Breast epithelium (tissue), 4 donors: ENCODE measurements at regions of chr17 and their contacts with region 1.

Region 1: DNA sequence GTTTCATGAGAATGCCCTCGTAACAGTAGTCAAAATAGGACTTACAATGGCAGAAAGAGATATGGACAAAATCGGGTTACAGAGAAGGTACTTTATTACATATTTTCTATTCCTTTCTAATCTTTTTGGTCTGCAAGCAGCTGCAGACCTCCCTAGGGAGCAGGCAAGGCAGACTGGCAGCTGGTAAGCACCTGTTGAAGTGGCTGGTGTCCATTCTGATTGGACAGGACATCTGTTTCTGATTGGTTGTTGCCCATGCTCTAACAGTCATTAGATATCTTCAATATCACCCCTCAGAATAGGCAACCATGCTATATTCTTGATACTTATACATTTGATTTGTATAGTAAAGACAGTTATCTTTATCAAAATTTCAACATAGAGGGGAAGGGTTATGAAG is 606.3 kb downstream of the KCNJ2 start:
- DNase-seq: no peak
- H3K4me3 ChIP-seq: no peak overlapping the region
- H3K27ac ChIP-seq: no peak overlapping the region
- H3K4me1 ChIP-seq: no peaks in the 10 kb centered on the region
- H3K27me3 ChIP-seq: no peaks in the 10 kb centered on the region
- CTCF ChIP-seq: no peak
- POLR2A ChIP-seq: no peak

Region 2: DNA sequence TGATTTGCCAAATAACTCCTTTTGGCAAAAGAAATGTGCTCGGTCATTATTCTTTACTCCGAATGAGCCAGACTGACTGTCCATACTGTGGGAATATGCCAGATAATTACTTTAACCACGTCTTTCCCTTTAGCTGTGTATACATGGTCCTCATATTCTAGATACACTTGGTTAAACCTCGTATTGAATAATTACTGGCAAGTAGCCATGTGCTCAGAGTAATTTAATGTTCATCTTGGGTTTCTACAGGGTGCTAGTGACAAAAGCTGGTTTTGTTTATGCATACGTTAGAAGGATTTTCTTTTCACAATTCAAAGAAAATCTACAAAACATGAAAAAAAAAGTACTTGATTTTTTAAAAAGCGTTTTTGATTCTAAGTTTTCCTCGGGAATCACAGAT is 66.1 kb before region 1 on chr17:
- intact Hi-C with region 1: loop called (anchors 2 kb)
- DNase-seq: no peak
- H3K4me3 ChIP-seq: no peak overlapping the region
- H3K27ac ChIP-seq: no peak overlapping the region
- H3K4me1 ChIP-seq: no peaks in the 10 kb centered on the region
- H3K27me3 ChIP-seq: peaks cover 0 to 7% of the 10 kb centered on the region in 2 donors
- CTCF ChIP-seq: no peak
- POLR2A ChIP-seq: no peak

Region 3: GRCh38 chr17:70739065-70739464 is 36.6 kb before region 1 on chr17:
- intact Hi-C with region 1: no loop called
- DNase-seq: no peak
- H3K4me3 ChIP-seq: no peak overlapping the region
- H3K27ac ChIP-seq: no peak overlapping the region
- H3K4me1 ChIP-seq: no peaks in the 10 kb centered on the region
- H3K27me3 ChIP-seq: peaks cover 0 to 7% of the 10 kb centered on the region in 2 donors
- CTCF ChIP-seq: no peak
- POLR2A ChIP-seq: no peak

Region 4: GRCh38 chr17:70752972-70753467 is 22.7 kb before region 1 on chr17:
- intact Hi-C with region 1: loop called (anchors 2 kb)
- DNase-seq: no peak
- H3K4me3 ChIP-seq: no peak overlapping the region
- H3K27ac ChIP-seq: no peak overlapping the region
- H3K4me1 ChIP-seq: no peaks in the 10 kb centered on the region
- H3K27me3 ChIP-seq: no peaks in the 10 kb centered on the region
- CTCF ChIP-seq: no peak
- POLR2A ChIP-seq: no peak

Region 5: GRCh38 chr17:71023249-71024030 is 247.8 kb after region 1 on chr17:
- intact Hi-C with region 1: no loop called
- DNase-seq: no peak
- H3K4me3 ChIP-seq: no peak overlapping the region
- H3K27ac ChIP-seq: no peak overlapping the region
- H3K4me1 ChIP-seq: no peaks in the 10 kb centered on the region
- H3K27me3 ChIP-seq: no peaks in the 10 kb centered on the region
- CTCF ChIP-seq: no peak
- POLR2A ChIP-seq: no peak